Prostate gland (tissue), 2 donors: ENCODE measurements at regions of chr2 and their contacts with region 1.

Region 1: GRCh38 chr2:147989809-147990403 is 30.6 kb downstream of the ORC4 start:
- DNase-seq: no peak
- H3K4me3 ChIP-seq: no peak overlapping the region
- H3K27ac ChIP-seq: no peak overlapping the region
- H3K4me1 ChIP-seq: no peaks in the 10 kb centered on the region
- H3K27me3 ChIP-seq: no peaks in the 10 kb centered on the region
- CTCF ChIP-seq: peak in 3 of 4 experiments; percentile 31 to 67 (median 61)
- POLR2A ChIP-seq: no peak

Region 2: DNA sequence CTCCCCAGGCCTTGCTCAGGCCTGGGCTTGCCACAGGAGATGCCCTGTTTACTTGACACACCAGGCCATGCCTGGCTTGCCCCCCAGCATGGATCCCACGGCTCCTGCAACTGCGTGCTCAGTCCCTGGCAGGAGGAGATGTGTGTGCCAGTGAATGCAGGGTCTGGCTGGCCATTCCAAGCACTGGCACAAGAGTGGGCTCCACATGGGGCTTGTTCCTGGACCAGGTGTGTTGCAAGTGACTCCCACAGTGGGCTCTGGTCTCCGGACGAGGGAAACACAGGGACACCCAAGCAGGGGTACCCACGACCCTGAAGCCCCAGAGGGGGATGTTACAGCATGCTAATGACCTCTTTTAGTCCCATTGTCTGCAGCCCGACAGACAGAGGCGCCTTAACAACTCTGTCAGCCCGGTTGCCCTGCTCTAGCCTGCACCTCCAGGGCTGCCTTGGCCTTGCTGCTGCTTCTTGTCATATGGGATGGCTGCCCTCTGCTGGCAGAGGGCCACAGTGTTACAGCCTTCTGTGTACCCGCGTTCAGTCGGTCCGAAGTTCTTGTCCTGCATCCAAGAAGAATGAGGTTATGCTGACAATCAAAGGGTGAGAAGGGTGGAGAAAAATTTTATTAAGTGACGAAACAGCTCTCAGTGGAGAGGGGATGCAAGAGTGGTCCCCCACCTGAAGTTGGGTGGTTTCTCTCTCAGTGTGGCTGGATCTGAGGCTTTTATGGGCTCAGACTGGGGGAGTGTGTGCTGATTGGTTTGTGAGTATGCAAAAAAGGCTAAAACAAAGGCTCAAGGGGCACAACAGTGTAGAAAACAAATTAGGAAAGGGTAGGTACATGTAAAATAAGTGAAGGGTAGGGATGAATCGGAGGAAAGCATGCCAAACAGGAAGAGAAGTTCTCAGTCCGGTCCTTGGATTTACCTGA is 211.4 kb after region 1 on chr2:
- intact Hi-C with region 1: loop called (anchors 5 kb)
- DNase-seq: peak; percentile 5
- H3K4me3 ChIP-seq: no peak overlapping the region
- H3K27ac ChIP-seq: no peak overlapping the region
- H3K4me1 ChIP-seq: no peaks in the 10 kb centered on the region
- H3K27me3 ChIP-seq: no peaks in the 10 kb centered on the region
- CTCF ChIP-seq: no peak
- POLR2A ChIP-seq: no peak

Region 3: DNA sequence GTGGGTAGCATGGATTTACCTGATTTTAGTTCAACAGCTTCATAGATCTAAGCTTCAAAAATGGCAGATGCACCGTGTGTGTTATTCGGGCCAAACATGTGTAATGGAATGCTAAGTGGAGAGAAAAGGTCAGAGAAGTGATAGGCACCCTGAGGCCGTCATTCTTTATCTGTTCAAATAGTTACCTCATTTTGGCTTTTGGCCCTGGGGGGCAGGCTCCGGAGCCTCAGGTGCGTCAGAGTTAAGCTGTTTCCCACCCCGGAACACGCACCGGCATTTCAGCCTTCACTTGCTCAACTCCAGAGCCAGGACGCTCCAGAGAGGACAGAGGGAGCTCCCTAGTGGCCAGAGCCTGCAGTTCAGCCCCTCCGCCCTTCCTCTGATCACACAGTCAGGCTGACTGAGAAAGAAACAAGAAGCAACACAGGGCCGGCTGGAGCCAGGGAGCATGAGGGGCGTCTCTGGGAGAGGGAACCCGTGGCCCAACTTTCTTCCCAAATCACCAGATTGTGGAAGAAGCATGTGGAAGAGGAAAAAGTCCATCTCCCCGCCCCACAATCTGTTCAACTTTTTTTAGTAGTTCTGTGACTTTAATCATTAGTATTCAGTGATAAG is 519.5 kb after region 1 on chr2:
- intact Hi-C with region 1: loop called (anchors 5 kb)
- DNase-seq: peak; percentile 64
- H3K4me3 ChIP-seq: peak overlapping the region in 1 of 2 donors; percentile 9
- H3K27ac ChIP-seq: no peak overlapping the region
- H3K4me1 ChIP-seq: no peaks in the 10 kb centered on the region
- H3K27me3 ChIP-seq: no peaks in the 10 kb centered on the region
- CTCF ChIP-seq: peak; percentile 31 to 79 (median 68)
- POLR2A ChIP-seq: no peak